K562 (cell line): ENCODE measurements at regions of chr19 and their contacts with region 1.

Region 1: DNA sequence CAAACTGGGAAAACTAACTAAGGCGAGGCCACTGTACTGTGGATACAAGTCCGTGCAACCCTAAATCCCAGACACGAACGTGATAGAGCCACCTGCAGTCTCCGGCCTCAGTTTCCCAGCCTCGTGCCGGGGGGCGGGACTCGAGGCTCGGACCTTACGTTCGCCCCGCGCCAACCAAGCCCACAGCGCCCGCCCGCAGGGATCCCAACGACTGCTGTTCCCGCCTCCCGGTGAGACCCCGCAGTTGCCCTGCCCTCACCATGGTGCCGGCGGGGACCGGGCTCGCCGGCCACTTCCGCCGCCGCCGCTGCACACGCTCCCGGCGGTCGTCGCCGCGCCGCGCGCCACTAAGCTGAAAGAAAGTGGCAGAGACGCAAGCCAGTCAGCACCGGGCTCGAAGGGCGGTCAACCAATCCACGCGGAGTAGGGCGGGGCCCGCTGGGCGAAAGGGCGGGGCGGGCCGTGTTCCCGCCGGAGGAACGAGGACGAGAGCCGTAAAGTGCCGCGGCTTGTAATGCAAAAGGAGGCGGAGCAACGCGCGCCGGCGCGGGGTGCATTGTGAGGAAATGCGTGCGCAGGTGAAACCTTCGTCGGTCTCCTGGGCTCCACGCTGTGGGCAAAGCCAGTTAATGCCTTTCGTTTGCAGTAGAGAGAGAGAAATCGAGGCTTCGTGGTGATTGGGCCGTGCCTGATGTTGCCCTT is at the start of gene LSM4:
- DNase-seq: peak; percentile 97 to 100 (median 98)
- ATAC-seq: peak; percentile 96
- H3K4me3 ChIP-seq: peak within 1 kb of the TSS; percentile 69
- H3K27ac ChIP-seq: peak within 1 kb of the TSS; percentile 90
- H3K4me1 ChIP-seq: peaks cover 45 to 58% of the 10 kb centered on the region in 2 experiments
- H3K27me3 ChIP-seq: no peaks in the 10 kb centered on the region
- CTCF ChIP-seq: peak; percentile 42 to 69 (median 63); a peak in 4 of 6 replicates
- EP300 ChIP-seq: no peak
- POLR2A ChIP-seq: peak; percentile 91
- RAD21 ChIP-seq: peak in 1 of 2 experiments; percentile 56; a peak in 3 of 4 replicates
- polyA plus RNA-seq, gene LSM4: 11.9 to 29.7 TPM

Region 2: GRCh38 chr19:18117692-18118378 is 205.1 kb before region 1 on chr19:
- CTCF ChIA-PET with region 1: no interaction called
- POLR2A ChIA-PET with region 1: no interaction called
- in situ Hi-C with region 1: no loop called
- intact Hi-C with region 1: loop called (anchors 10 kb)
- DNase-seq: peak; percentile 93 to 99 (median 98)
- ATAC-seq: peak; percentile 94
- H3K4me3 ChIP-seq: peak overlapping the region; percentile 82
- H3K27ac ChIP-seq: peak overlapping the region; percentile 76
- H3K4me1 ChIP-seq: peaks cover 13 to 25% of the 10 kb centered on the region in 2 experiments; a peak in 4 of 5 replicates
- H3K27me3 ChIP-seq: no peaks in the 10 kb centered on the region
- CTCF ChIP-seq: 0 out of 6 replicates have a peak, but pooled peaks of 1 of the 3 experiments have one; percentile 1
- EP300 ChIP-seq: no peak
- POLR2A ChIP-seq: peak; percentile 35; the same call in 1 of the 2 replicates
- RAD21 ChIP-seq: no peak

Region 3: DNA sequence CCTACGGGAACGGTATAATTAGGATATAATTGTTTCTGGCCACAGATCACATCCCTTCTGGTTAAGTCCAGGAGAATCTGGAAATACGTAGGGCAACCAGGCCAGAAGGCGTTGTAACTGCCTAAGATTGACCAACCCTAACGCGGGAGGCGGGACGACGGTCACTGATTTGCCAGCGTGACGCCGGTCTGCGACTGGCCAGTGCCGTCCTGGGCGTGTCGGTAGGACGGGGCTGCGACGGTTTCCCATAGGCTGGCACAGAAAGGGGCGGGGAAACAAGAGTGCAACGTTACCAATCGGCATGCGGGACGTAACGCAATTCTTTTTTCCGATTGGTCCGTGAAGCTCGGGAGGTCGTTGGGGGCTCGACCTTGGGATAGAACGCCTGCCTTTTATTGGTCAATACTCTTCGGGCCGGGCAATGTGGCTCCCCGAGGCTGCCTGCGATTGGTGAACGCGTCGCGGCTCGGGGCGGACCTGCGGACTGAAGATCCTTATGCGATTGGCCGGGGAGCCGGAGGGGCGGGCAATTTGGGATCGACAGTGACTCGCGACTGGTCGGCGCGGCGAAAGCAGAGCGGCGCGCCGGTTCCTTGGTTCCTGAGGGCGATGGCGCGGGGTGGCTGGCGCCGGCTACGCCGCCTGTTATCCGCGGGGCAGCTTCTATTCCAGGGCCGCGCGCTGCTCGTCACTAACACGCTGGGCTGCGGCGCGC is 130.1 kb before region 1 on chr19 and contains the start of gene MPV17L2:
- CTCF ChIA-PET with region 1: interaction called, 3 read pairs
- POLR2A ChIA-PET with region 1: no interaction called
- in situ Hi-C with region 1: no loop called
- intact Hi-C with region 1: loop called (anchors 1 kb)
- DNase-seq: peak; percentile 89 to 100 (median 94)
- ATAC-seq: peak; percentile 93
- H3K4me3 ChIP-seq: peak within 1 kb of the TSS; percentile 89
- H3K27ac ChIP-seq: peak within 1 kb of the TSS; percentile 80
- H3K4me1 ChIP-seq: peaks cover 17 to 46% of the 10 kb centered on the region in 2 experiments; a peak in 4 of 5 replicates
- H3K27me3 ChIP-seq: no peaks in the 10 kb centered on the region
- CTCF ChIP-seq: no peak
- EP300 ChIP-seq: no peak
- POLR2A ChIP-seq: peak; percentile 83
- RAD21 ChIP-seq: no peak
- polyA plus RNA-seq, gene MPV17L2: 10.6 to 11.0 TPM

Region 4: DNA sequence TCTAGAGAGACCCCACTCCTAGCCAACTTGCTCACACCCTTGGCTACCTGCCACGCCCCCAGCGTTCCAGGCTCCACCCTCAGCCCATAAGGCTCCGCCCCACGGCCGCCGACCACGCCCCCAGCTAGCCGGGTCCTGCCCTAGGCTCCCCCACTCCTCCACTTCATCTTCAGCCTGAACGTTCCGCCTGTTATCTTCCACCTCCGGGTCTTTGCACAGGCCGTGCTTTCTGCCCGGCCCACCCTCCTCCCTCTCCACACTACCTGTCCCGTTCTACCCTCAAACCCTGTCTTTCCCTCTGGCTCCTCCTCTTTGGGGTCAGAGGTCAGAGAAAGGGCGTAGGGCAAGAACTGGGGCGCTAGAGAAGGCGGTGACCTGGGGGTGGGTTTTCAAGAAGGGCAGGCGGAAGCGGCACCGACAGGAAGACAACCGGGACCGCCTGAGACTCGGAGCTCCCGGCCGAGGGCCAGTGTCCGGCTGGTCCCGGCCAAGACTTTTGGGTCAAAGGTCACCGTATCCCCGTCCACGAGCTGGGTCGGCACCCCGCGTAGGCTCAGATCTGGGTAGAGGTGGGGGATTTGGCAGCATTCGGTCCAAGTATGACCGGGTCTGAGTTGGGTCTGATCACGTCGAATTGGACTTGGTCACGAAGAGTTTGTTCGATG is 98.9 kb before region 1 on chr19:
- CTCF ChIA-PET with region 1: no interaction called
- POLR2A ChIA-PET with region 1: no interaction called
- in situ Hi-C with region 1: no loop called
- intact Hi-C with region 1: no loop called
- DNase-seq: peak; percentile 93 to 96 (median 95)
- ATAC-seq: peak; percentile 79
- H3K4me3 ChIP-seq: peak overlapping the region; percentile 48
- H3K27ac ChIP-seq: peak overlapping the region; percentile 84
- H3K4me1 ChIP-seq: peaks cover 23 to 61% of the 10 kb centered on the region in 2 experiments; a peak in 4 of 5 replicates
- H3K27me3 ChIP-seq: no peaks in the 10 kb centered on the region
- CTCF ChIP-seq: peak in 1 of 3 experiments; percentile 12; a peak in 1 of 6 replicates
- EP300 ChIP-seq: peak; percentile 30; the same call in 1 of the 2 replicates
- POLR2A ChIP-seq: peak; percentile 75; the same call in 1 of the 2 replicates
- RAD21 ChIP-seq: 0 out of 4 replicates have a peak, but pooled peaks have one; percentile 4 to 6

Region 5: GRCh38 chr19:18291590-18292461 is 31.1 kb before region 1 on chr19:
- CTCF ChIA-PET with region 1: no interaction called
- POLR2A ChIA-PET with region 1: interaction called, 7 read pairs
- in situ Hi-C with region 1: no loop called
- intact Hi-C with region 1: loop called (anchors 1 kb)
- DNase-seq: peak; percentile 88 to 97 (median 92)
- ATAC-seq: peak; percentile 81
- H3K4me3 ChIP-seq: peak overlapping the region; percentile 64
- H3K27ac ChIP-seq: peak overlapping the region; percentile 98
- H3K4me1 ChIP-seq: peaks cover 31 to 64% of the 10 kb centered on the region in 2 experiments
- H3K27me3 ChIP-seq: no peaks in the 10 kb centered on the region
- CTCF ChIP-seq: no peak
- EP300 ChIP-seq: no peak
- POLR2A ChIP-seq: peak; percentile 79
- RAD21 ChIP-seq: peak in 1 of 2 experiments; percentile 4; a peak in 2 of 4 replicates

Region 6: GRCh38 chr19:18304458-18305310 is 18.2 kb before region 1 on chr19:
- CTCF ChIA-PET with region 1: no interaction called
- POLR2A ChIA-PET with region 1: interaction called, 15 read pairs
- in situ Hi-C with region 1: no loop called
- intact Hi-C with region 1: no loop called
- DNase-seq: peak; percentile 87 to 93 (median 90)
- ATAC-seq: peak; percentile 95
- H3K4me3 ChIP-seq: peak overlapping the region; percentile 28
- H3K27ac ChIP-seq: peak overlapping the region; percentile 81
- H3K4me1 ChIP-seq: peaks cover 30 to 76% of the 10 kb centered on the region in 2 experiments
- H3K27me3 ChIP-seq: no peaks in the 10 kb centered on the region
- CTCF ChIP-seq: peak in 2 of 3 experiments; percentile 16 to 19; a peak in 2 of 6 replicates
- EP300 ChIP-seq: no peak
- POLR2A ChIP-seq: peak; percentile 83; the same call in 1 of the 2 replicates
- RAD21 ChIP-seq: peak in 1 of 2 experiments; percentile 44; a peak in 3 of 4 replicates